Panc1 (cell line): ENCODE measurements at regions of chr17 and their contacts with region 1.

Region 1: GRCh38 chr17:5683241-5683640 is 98.9 kb upstream of the NLRP1 start:
- DNase-seq: no peak
- ATAC-seq: no peak
- H3K4me3 ChIP-seq: no peak overlapping the region
- H3K27ac ChIP-seq: no peak overlapping the region
- H3K4me1 ChIP-seq: no peaks in the 10 kb centered on the region
- H3K27me3 ChIP-seq: peaks cover 9% of the 10 kb centered on the region
- CTCF ChIP-seq: no peak

Region 2: DNA sequence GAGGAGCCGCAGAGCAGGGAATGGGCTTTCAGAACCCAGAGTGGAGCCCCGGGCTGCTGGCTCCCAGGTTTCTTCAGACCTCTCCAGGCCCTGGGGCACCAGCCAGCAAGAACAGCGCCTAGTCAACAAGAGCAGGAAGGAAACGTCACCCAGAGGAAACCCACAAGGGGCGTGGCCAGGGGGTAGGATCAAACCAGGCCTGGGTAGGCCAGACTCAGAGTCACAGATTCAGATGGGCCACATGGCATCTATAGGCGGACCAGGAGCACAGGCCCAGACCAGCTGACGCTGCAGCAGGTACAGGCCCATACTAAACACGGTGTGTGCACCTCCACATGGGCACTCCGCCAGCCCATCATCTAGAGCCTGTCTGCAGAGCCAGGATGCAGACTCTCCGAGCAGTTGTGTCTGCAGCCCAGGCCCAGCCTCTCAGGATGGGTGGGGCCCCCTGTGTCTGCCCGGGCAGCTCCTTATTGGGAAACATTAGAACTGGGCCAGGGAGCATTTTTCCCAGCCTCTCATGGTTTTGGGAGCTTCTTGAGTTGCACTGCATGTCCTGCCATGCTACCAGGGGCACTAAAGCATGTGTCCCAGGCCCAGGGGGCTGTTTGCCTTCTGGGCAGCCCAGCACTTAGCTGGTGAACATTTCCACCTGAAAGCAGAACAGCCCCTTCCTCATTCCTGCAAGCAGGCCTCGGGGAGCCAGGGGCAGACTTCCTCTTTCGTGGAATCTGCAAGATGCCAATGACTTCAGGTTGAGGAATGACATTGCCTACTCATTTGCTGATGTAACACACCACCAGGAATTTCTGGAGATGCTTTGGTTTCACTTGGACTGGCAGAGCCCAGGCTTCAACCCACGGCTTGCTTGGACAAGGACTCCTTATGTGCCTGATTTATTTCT is 98.6 kb before region 1 on chr17 and contains the start of gene NLRP1:
- CTCF ChIA-PET with region 1: no interaction called
- POLR2A ChIA-PET with region 1: no interaction called
- in situ Hi-C with region 1: no loop called
- intact Hi-C with region 1: no loop called
- DNase-seq: no peak
- ATAC-seq: peak; percentile 52; the same call in 1 of the 2 replicates
- H3K4me3 ChIP-seq: no peak within 1 kb of the TSS; a peak in 1 of 4 replicates
- H3K27ac ChIP-seq: no peak within 1 kb of the TSS
- H3K4me1 ChIP-seq: no peaks in the 10 kb centered on the region
- H3K27me3 ChIP-seq: no peaks in the 10 kb centered on the region
- CTCF ChIP-seq: no peak
- total RNA-seq, gene NLRP1: 0.57 TPM

Region 3: DNA sequence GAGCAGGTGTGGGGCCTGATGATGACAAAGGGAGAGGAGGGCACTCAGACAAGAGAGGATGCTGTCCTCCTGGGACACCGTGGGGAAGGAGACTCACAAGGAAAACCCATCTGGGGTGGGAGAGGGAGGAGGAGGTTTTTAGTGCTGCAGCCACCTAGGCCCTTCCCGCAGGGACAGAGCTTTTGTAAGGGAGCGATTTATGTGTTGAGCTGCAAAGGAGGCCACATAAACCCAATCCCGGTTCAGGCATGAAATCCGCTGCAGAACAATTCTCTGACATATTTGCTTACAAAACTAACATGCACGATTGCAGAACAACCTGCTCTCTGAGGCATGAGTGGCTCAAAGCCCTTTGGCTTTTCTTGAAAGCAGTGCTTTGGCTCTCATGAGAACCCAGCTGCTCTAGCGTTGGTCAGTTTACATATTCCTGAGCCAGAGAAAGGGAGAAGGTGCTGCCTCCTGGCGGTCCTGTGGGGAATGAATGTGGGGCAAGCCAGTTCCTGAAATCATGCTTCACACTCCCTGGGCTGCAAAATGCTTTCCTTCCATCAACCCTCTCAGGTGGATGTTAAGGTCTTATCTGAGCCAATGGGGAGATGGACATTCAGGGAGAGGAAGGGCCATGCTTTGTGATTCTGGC is 23.5 kb after region 1 on chr17:
- CTCF ChIA-PET with region 1: no interaction called
- POLR2A ChIA-PET with region 1: interaction called, 15 read pairs
- in situ Hi-C with region 1: no loop called
- intact Hi-C with region 1: no loop called
- DNase-seq: peak; percentile 45
- ATAC-seq: no peak
- H3K4me3 ChIP-seq: no peak overlapping the region
- H3K27ac ChIP-seq: no peak overlapping the region
- H3K4me1 ChIP-seq: no peaks in the 10 kb centered on the region
- H3K27me3 ChIP-seq: no peaks in the 10 kb centered on the region; the same call in 1 of the 2 replicates
- CTCF ChIP-seq: peak; percentile 87